ENCODE measurements at regions of chr14 and their contacts with region 1.

Region 1: GRCh38 chr14:22296722-22297121 is 292.3 kb downstream of the DAD1 start:
- DNase-seq: no peak
- H3K4me3 ChIP-seq: no peak overlapping the region
- H3K27ac ChIP-seq: no peak overlapping the region
- H3K4me1 ChIP-seq: peaks cover 0 to 4% (median 0%) of the 10 kb centered on the region in 4 experiments
- H3K27me3 ChIP-seq: no peaks in the 10 kb centered on the region

Region 2: GRCh38 chr14:22231018-22231417 is 65.7 kb before region 1 on chr14:
- CTCF ChIA-PET with region 1: interaction called, 3 read pairs
- POLR2A ChIA-PET with region 1: interaction called, 11 read pairs
- DNase-seq: peak; percentile 54 to 94 (median 91)
- H3K4me3 ChIP-seq: no peak overlapping the region
- H3K27ac ChIP-seq: no peak overlapping the region
- H3K4me1 ChIP-seq: peaks cover 32 to 55% (median 41%) of the 10 kb centered on the region in 4 experiments
- H3K27me3 ChIP-seq: no peaks in the 10 kb centered on the region

Region 3: DNA sequence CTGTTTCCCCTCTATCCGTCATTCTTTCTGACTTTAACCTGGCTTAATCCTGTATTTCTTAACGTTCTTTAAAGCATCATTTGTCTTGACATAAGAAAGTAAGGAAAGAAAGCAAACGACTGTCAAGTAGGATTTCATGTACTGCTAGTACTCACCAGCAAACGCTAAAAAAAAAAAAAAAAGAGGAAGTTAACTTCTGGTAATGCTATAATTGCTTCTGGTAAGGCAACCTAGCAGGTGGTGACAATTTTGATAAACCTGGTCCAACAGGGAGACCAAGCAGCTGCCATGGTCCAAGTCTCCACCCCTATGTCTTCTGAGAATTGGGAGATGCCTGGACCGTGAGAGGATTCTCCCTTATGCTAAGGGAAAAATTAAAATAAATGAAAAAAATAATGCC is 14.3 kb before region 1 on chr14:
- CTCF ChIA-PET with region 1: interaction called, 16 read pairs
- POLR2A ChIA-PET with region 1: interaction called, 3 read pairs
- DNase-seq: peak; percentile 46 to 88 (median 82)
- H3K4me3 ChIP-seq: peak overlapping the region in 1 of 7 experiments; percentile 33
- H3K27ac ChIP-seq: no peak overlapping the region
- H3K4me1 ChIP-seq: peaks cover 0 to 30% (median 25%) of the 10 kb centered on the region in 4 experiments
- H3K27me3 ChIP-seq: no peaks in the 10 kb centered on the region

Region 4: GRCh38 chr14:22325676-22326400 is 29.1 kb after region 1 on chr14:
- CTCF ChIA-PET with region 1: no interaction called
- POLR2A ChIA-PET with region 1: no interaction called
- DNase-seq: no peak
- H3K4me3 ChIP-seq: no peak overlapping the region
- H3K27ac ChIP-seq: no peak overlapping the region
- H3K4me1 ChIP-seq: no peaks in the 10 kb centered on the region
- H3K27me3 ChIP-seq: peaks cover 0 to 5% (median 0%) of the 10 kb centered on the region in 5 experiments

Measured in common myeloid progenitor, CD34-positive (primary cell).